ENCODE measurements at regions of chr9 and their contacts with region 1.

Region 1: DNA sequence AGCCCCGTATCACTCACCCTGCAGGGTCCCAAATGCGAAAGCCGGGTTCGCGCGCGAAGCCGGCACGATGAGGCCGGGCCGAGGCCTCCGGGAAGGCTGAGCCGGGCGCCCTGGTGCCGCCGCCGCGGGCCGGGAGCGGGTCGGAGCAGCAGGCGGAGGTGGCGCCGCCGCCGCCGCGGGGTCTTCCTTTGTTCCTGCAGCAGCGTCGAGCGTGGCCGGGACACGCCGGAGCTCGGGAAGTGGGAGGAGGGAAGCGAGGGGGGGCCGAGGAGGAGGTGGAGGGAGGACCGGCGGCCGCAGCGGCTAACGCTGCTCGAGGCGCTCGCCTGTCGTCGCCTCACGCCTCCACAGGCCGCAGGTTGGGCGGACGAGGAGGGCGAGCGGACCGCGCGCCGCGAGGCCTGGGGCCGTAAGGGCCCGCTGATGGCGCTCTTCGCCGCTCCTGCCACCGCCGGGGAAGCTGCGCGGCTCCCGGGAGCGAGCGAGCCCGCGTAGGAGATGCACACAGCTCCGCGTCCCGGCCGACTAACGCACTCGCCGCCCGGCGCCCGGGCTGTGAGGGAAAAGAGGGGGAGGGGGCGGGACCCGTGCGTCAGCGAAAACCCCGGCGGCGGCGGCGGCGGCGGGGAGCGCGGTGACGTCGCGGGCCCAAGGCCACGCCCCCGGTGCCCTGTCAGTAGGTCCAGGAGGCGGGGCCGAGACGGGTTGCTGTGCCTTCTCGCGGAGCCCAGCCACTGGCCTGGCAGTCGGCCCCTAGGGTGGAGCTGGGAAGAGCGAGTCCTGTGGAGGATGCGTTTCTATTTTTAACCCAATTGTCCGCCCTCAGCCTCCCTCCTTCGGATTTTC is at the start of gene ZFAND5:
- DNase-seq: peak; percentile 97
- H3K4me3 Mint-ChIP-seq: peak within 1 kb of the TSS; percentile 91
- H3K27ac Mint-ChIP-seq: peak within 1 kb of the TSS; percentile 96
- H3K4me1 Mint-ChIP-seq: peaks cover 32% of the 10 kb centered on the region
- H3K27me3 Mint-ChIP-seq: no peaks in the 10 kb centered on the region
- total RNA-seq, gene ZFAND5: 115 and 121 TPM in 2 replicates

Region 2: DNA sequence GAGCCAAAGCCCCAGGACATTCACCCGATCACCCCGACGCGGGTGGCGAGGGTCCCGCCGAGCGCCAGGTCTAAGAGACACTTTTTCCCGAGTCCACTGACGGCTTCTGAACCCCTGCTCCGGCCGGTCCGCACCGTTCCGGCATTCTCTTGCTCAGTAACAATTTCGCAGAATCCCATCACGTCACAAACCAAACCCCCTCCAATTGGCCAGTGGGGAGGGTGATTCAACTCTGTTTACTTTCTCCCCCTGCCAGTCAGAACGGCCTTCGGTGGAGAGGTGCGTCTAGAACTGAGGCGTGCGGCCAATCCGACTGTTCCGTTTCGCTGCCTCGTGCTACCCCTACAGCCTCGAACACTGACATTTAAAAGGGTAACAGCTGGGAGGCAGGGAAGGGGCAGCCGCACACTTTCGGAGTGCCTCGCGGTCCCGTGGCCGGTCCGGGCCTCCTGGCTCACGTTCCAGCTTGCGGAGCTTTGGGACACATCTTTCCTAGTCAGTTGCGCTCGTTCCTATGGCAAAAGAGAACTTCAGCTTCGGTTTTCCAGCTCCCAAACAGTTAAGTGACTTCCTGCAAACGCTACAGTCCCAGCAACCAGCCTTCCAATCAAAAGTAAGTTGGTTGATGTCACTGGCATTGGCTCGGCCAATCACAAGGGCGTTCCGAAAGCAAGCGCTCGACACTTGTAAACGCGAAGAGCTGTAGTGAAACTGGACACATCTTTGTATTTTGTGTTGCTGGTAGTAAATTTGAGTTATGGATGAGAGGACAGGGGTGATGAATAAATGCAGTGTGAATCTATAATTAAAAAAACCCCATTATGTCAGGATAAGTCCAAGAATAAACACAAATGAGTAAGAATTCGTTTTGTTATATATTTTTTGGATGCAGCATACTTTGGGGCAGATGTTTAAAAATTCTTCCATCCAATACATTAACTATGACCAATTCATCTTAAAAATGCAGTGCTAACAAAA is 1950.8 kb before region 1 on chr9 and contains the start of gene KLF9:
- intact Hi-C with region 1: loop called (anchors 10 kb)
- DNase-seq: peak; percentile 97
- H3K4me3 Mint-ChIP-seq: peak within 1 kb of the TSS; percentile 100
- H3K27ac Mint-ChIP-seq: peak within 1 kb of the TSS; percentile 100
- H3K4me1 Mint-ChIP-seq: peaks cover 45% of the 10 kb centered on the region
- H3K27me3 Mint-ChIP-seq: no peaks in the 10 kb centered on the region
- total RNA-seq, gene KLF9: 16.3 and 16.5 TPM in 2 replicates

Region 3: DNA sequence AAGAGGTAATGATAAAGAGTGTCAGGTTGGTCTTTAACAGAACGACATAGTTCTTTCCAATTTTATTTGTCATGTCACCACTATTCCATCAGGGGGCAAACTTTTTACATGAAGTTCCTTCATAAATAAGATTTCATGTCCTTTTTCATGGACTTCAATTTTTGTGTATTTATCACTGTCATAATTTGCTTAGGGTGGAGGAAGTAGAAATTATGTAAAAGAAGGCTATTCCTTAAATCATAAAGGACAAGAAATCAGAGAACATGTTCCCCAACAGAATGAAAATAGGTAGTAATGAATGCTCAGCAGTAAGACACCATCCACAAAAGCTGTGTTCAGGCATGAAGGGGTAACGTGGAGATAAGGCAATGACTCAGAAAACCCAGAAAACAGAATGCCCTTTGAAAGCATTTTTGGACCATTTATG is 72.6 kb before region 1 on chr9:
- intact Hi-C with region 1: loop called (anchors 2 kb)
- DNase-seq: no peak
- H3K4me3 Mint-ChIP-seq: no peak overlapping the region
- H3K27ac Mint-ChIP-seq: no peak overlapping the region
- H3K4me1 Mint-ChIP-seq: peaks cover 4% of the 10 kb centered on the region
- H3K27me3 Mint-ChIP-seq: peaks cover 31% of the 10 kb centered on the region

Region 4: DNA sequence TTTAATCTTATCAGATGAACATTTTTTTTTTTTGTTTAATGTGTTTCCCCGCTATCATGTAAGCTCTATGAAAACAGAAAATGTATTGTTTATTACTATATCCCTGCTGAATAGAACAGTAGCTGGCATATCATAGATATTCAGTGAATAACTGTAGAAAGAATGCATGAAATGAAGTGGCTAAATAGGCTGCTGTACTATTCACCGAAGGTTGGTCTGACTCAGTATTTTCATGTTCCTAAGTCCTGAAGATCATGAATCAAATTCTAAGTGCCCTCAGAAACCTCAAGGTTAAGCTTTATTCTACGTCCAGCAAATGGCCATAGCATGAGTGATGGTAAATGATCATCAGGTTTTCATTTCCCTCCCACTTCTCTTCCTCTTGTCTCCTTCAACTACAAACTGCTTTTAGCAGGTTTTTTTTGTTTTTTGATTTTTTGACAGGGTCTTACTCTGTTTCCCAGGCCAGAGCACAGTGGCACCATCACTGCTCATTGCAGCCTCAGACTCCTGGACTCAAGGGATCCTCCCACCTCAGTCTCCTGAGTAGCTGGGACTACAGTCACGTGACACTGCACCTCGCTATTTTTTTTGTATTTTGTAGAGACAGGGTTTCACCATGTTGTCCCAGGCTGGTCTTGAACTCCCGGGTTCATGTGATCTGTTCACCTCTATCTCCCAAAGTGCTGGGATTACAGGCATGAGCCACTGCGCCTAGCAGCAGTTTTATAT is 19.2 kb after region 1 on chr9:
- intact Hi-C with region 1: loop called (anchors 1 kb)
- DNase-seq: no peak
- H3K4me3 Mint-ChIP-seq: no peak overlapping the region
- H3K27ac Mint-ChIP-seq: no peak overlapping the region
- H3K4me1 Mint-ChIP-seq: peaks cover 11% of the 10 kb centered on the region
- H3K27me3 Mint-ChIP-seq: peaks cover 4% of the 10 kb centered on the region

Region 5: GRCh38 chr9:72473474-72474261 is 108.8 kb after region 1 on chr9:
- intact Hi-C with region 1: loop called (anchors 1 kb)
- DNase-seq: no peak
- H3K4me3 Mint-ChIP-seq: peak overlapping the region; percentile 42
- H3K27ac Mint-ChIP-seq: peak overlapping the region; percentile 83
- H3K4me1 Mint-ChIP-seq: peaks cover 39% of the 10 kb centered on the region
- H3K27me3 Mint-ChIP-seq: no peaks in the 10 kb centered on the region

Region 6: DNA sequence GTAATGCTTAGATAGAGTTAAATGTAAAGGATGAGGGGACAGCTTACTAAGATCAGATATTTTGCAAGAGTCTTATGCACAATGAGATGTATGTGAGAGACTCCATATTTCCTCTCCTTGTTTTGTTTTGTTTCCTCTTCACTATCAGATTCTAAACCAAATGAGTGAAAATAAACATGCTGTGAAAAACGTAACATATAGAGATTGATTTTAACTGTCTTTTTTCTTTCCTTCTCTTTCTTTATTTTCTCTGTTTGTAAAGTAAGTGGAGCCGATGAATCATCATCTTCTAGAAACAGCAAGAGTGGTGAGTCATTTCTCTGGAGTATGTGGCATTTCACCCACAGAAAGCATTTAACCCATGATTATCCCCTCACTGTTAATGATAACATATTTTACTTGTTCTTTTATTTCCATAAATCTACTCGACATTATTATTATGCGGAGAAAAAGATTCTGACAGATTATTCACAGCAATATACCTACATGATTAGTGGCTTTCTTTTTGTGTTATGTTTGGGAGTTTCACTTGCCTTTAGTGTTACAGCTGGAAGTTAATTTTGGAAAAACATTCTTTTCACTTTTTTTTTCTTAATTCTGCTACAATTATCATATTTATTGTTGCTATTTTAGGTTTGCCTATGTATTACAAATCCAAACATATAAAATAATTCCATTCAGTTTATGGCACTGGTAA is 784.6 kb after region 1 on chr9:
- intact Hi-C with region 1: loop called (anchors 5 kb)
- DNase-seq: peak; percentile 76
- H3K4me3 Mint-ChIP-seq: peak overlapping the region; percentile 65
- H3K27ac Mint-ChIP-seq: peak overlapping the region; percentile 89
- H3K4me1 Mint-ChIP-seq: peaks cover 54% of the 10 kb centered on the region
- H3K27me3 Mint-ChIP-seq: no peaks in the 10 kb centered on the region